AG04449 (cell line): ENCODE measurements at regions of chr14 and their contacts with region 1.

Region 1: GRCh38 chr14:35438910-35439713 is 34.6 kb upstream of the NFKBIA start:
- DNase-seq: no peak
- H3K4me3 ChIP-seq: no peak overlapping the region
- CTCF ChIP-seq: peak; percentile 24

Region 2: DNA sequence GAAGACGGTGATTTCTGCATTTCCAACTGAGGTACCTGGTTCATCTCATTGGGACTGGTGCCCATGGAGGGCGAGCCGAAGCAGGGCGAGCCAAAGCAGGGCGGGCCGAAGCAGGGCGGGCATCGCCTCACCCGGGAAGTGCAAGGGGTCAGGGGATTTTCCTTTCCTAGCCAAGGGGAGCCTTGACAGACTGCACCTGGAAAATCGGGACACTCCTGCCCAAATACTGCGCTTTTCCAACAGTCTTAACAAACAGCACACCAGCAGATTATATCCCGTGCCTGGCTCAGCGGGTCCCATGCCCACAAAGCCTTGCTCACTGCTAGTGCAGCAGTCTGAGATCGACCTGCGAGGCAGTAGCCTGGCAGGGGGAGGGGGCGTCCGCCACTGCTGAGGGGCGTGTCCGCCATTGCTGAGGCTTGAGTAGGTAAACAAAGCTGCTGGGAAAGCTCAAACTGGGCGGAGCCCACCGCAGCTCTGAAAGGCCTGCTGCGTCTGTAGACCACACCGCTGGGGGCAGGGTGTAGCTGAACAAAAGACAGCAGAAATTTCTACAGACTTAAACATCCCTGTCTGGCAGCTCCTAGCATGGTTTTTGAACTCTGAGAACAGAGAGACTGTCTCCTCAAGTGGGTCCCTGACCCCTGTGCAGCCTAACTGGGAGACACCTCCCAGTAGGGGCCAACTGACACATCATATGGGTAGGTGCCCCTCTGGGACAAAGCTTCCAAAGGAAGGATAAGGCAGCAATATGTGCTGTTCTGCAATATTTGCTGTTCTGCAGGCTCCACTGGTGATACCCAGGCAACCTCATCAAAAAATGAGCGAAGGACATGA is 641.1 kb before region 1 on chr14:
- CTCF ChIA-PET with region 1: no interaction called
- POLR2A ChIA-PET with region 1: no interaction called
- DNase-seq: no peak
- H3K4me3 ChIP-seq: no peak overlapping the region
- CTCF ChIP-seq: no peak

Region 3: GRCh38 chr14:35594616-35595015 is 155.5 kb after region 1 on chr14:
- CTCF ChIA-PET with region 1: no interaction called
- POLR2A ChIA-PET with region 1: no interaction called
- DNase-seq: no peak
- H3K4me3 ChIP-seq: no peak overlapping the region
- CTCF ChIP-seq: no peak

Region 4: GRCh38 chr14:35814371-35815005 is 375.4 kb after region 1 on chr14:
- CTCF ChIA-PET with region 1: interaction called, 22 read pairs
- POLR2A ChIA-PET with region 1: no interaction called
- DNase-seq: no peak
- H3K4me3 ChIP-seq: no peak overlapping the region
- CTCF ChIP-seq: peak; percentile 72